ENCODE measurements at regions of chr6 and their contacts with region 1.

Region 1: GRCh38 chr6:130885392-130886192 is 58.4 kb downstream of the SMLR1 start:
- DNase-seq: no peak
- ATAC-seq: peak; percentile 89
- H3K4me3 ChIP-seq: no peak overlapping the region
- H3K27ac ChIP-seq: no peak overlapping the region
- H3K4me1 ChIP-seq: no peaks in the 10 kb centered on the region
- H3K27me3 ChIP-seq: no peaks in the 10 kb centered on the region

Region 2: DNA sequence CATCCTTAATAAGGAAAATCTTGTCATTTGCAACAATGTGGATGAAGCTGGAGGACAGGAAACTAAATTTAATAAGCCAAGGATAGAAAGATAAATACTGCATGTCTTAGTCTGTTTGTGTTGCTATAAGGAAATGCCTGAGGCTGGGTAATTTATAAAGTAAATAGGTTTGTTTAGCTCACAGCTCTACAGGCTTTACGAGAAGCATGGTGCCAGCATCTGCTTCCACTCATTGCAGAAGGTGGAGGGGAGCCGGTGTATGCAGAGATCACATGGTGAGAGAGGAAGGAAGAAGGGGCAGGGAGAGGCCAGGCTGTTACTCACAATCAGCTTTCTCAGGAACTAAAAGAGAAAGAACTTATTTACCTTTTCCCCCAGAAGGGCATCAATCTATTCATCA is 177.3 kb before region 1 on chr6:
- intact Hi-C with region 1: no loop called
- DNase-seq: no peak
- ATAC-seq: no peak
- H3K4me3 ChIP-seq: no peak overlapping the region
- H3K27ac ChIP-seq: no peak overlapping the region
- H3K4me1 ChIP-seq: no peaks in the 10 kb centered on the region
- H3K27me3 ChIP-seq: no peaks in the 10 kb centered on the region

Region 3: DNA sequence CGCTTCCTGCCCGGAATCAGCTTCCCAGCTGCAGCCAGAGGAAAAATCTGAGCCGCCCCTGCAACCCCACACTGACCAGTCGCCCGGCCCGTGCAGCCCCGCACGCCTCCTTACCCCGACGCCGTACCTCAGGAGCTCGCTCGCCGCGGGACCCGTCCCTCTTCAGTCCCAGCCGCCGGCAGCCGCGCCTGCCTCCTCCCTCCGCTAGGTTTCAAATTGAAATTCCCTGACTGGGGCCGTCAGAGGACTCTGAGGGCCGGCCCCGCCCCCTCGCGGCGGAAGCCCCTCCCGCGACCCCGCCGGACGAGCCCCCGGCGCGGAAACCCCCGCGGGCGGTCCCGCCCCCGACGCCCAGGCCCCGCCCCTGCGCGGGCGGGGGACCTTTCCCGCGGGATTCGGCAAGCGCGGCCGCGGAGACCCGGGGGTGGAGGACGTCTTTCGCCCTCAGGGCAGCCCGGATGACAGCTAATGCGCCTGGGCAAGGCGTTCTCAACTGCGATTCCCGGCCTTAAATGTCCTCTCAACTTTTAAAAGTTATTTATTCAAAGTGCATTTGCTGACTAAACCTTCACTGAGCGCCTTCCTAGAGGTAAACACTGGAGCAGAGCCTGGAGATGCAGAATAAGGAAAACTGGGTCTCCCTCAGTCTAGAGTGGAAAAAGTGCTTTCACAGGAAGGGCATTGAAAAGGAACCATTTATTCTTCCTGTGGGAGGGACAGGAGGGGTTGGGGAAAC is 177.6 kb after region 1 on chr6 and contains the start of gene EPB41L2:
- intact Hi-C with region 1: loop called in 1 of 4 experiments (anchors 5 kb)
- DNase-seq: peak; percentile 90 to 97 (median 96)
- ATAC-seq: peak; percentile 98 to 99
- H3K4me3 ChIP-seq: peak within 1 kb of the TSS; percentile 92
- H3K27ac ChIP-seq: peak within 1 kb of the TSS; percentile 73
- H3K4me1 ChIP-seq: no peaks in the 10 kb centered on the region
- H3K27me3 ChIP-seq: no peaks in the 10 kb centered on the region
- total RNA-seq, gene EPB41L2: 95.3 to 120 (median 107) TPM

Region 4: GRCh38 chr6:131116749-131117360 is 231.3 kb after region 1 on chr6:
- intact Hi-C with region 1: loop called (anchors 2 to 5 kb)
- DNase-seq: no peak
- ATAC-seq: no peak
- H3K4me3 ChIP-seq: no peak overlapping the region
- H3K27ac ChIP-seq: no peak overlapping the region
- H3K4me1 ChIP-seq: no peaks in the 10 kb centered on the region
- H3K27me3 ChIP-seq: no peaks in the 10 kb centered on the region

Region 5: GRCh38 chr6:131532580-131533039 is 647.0 kb after region 1 on chr6:
- intact Hi-C with region 1: loop called in 3 of 4 experiments (anchors 5 to 10 kb)
- DNase-seq: no peak
- ATAC-seq: no peak
- H3K4me3 ChIP-seq: no peak overlapping the region
- H3K27ac ChIP-seq: no peak overlapping the region
- H3K4me1 ChIP-seq: no peaks in the 10 kb centered on the region
- H3K27me3 ChIP-seq: no peaks in the 10 kb centered on the region

Measured in right cardiac atrium (tissue), 5 donors.